Mammary epithelial cell (primary cell): ENCODE measurements at regions of chr11 and their contacts with region 1.

Region 1: GRCh38 chr11:128884703-128885338 is 6.3 kb upstream of the KCNJ5 start:
- DNase-seq: peak; percentile 60
- H3K4me3 ChIP-seq: no peak overlapping the region
- H3K27ac ChIP-seq: no peak overlapping the region
- H3K4me1 ChIP-seq: peaks cover 24% of the 10 kb centered on the region
- H3K27me3 ChIP-seq: no peaks in the 10 kb centered on the region
- CTCF ChIP-seq: peak; percentile 67 to 81

Region 2: DNA sequence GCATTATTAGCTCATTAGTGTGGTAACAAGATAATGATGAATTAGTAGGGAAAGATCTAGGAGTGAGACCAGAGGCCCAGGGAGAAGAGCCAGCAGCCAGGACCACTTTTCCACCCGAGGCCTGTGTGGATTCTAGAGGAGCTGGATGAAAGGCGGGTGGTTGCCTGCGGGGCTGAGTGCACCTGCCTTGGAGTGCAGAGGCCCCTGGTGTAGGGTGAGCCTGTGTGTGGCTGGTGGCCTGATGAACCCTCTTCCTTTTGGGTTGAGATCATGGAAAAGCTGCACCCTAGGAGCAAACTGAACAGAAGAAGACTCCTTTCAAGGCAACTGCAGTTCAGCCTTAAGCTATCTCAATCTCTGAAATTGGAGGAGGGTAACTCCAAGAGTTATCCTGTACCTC is 63.8 kb after region 1 on chr11:
- CTCF ChIA-PET with region 1: interaction called, 3 read pairs
- dilution Hi-C with region 1: loop called (anchors 5 kb)
- in situ Hi-C with region 1: loop called in 1 of 2 experiments (anchors 5 kb)
- intact Hi-C with region 1: no loop called
- DNase-seq: no peak
- H3K4me3 ChIP-seq: no peak overlapping the region
- H3K27ac ChIP-seq: no peak overlapping the region
- H3K4me1 ChIP-seq: no peaks in the 10 kb centered on the region
- H3K27me3 ChIP-seq: no peaks in the 10 kb centered on the region
- CTCF ChIP-seq: peak; percentile 2 to 40

Region 3: DNA sequence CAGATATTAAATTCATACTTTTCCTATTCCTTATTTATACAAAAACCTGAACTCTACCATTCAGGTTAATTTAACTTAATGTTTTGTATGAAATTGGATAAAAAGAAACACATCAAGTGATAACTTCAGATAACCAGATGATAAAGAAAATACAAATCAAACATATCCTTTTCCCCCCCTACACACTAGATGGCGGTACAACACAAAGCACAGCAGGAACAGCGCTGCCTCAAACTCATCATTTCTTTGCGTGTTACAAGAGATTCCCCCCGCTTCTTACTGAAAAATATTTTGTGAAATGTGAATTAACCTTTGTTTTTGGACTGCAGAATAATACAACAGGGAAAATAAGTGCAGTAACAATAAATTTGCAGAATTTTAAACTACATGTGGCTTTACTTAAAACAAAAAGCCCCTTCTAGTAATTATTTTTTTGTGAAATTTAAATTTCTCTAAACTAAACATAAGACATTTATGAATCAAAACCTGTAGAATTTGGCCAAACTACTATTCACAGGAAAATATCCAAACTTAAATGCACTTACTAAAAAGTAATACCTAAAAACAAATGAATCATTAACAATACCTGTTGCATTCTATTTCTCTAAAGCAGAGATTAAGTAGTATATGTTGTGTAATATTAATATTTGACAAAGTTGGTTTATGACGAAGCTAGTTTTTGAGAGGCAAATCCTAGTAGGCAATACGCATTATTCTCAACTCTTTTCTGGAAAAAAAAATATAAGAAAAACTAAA is 233.0 kb after region 1 on chr11:
- CTCF ChIA-PET with region 1: no interaction called
- dilution Hi-C with region 1: no loop called
- in situ Hi-C with region 1: loop called in 1 of 2 experiments (anchors 25 kb)
- intact Hi-C with region 1: loop called (anchors 1 kb)
- DNase-seq: peak; percentile 42
- H3K4me3 ChIP-seq: no peak overlapping the region
- H3K27ac ChIP-seq: no peak overlapping the region
- H3K4me1 ChIP-seq: peaks cover 10% of the 10 kb centered on the region
- H3K27me3 ChIP-seq: no peaks in the 10 kb centered on the region
- CTCF ChIP-seq: peak; percentile 93 to 94

Region 4: GRCh38 chr11:129143335-129143734 is 258.5 kb after region 1 on chr11:
- CTCF ChIA-PET with region 1: no interaction called
- dilution Hi-C with region 1: no loop called
- in situ Hi-C with region 1: no loop called
- intact Hi-C with region 1: no loop called
- DNase-seq: peak; percentile 100
- H3K4me3 ChIP-seq: peak overlapping the region in 2 of 3 experiments; percentile 20 to 50
- H3K27ac ChIP-seq: peak overlapping the region; percentile 98
- H3K4me1 ChIP-seq: peaks cover 38% of the 10 kb centered on the region
- H3K27me3 ChIP-seq: no peaks in the 10 kb centered on the region
- CTCF ChIP-seq: no peak

Region 5: GRCh38 chr11:129364143-129364654 is 479.4 kb after region 1 on chr11:
- CTCF ChIA-PET with region 1: no interaction called
- dilution Hi-C with region 1: no loop called
- in situ Hi-C with region 1: no loop called
- intact Hi-C with region 1: loop called (anchors 1 kb)
- DNase-seq: peak; percentile 82
- H3K4me3 ChIP-seq: no peak overlapping the region
- H3K27ac ChIP-seq: no peak overlapping the region
- H3K4me1 ChIP-seq: peaks cover 4% of the 10 kb centered on the region
- H3K27me3 ChIP-seq: peaks cover 21% of the 10 kb centered on the region
- CTCF ChIP-seq: peak; percentile 100

Region 6: GRCh38 chr11:129530154-129530895 is 645.5 kb after region 1 on chr11:
- CTCF ChIA-PET with region 1: no interaction called
- dilution Hi-C with region 1: no loop called
- in situ Hi-C with region 1: no loop called
- intact Hi-C with region 1: no loop called
- DNase-seq: no peak
- H3K4me3 ChIP-seq: no peak overlapping the region
- H3K27ac ChIP-seq: no peak overlapping the region
- H3K4me1 ChIP-seq: no peaks in the 10 kb centered on the region
- H3K27me3 ChIP-seq: no peaks in the 10 kb centered on the region
- CTCF ChIP-seq: no peak

Region 7: DNA sequence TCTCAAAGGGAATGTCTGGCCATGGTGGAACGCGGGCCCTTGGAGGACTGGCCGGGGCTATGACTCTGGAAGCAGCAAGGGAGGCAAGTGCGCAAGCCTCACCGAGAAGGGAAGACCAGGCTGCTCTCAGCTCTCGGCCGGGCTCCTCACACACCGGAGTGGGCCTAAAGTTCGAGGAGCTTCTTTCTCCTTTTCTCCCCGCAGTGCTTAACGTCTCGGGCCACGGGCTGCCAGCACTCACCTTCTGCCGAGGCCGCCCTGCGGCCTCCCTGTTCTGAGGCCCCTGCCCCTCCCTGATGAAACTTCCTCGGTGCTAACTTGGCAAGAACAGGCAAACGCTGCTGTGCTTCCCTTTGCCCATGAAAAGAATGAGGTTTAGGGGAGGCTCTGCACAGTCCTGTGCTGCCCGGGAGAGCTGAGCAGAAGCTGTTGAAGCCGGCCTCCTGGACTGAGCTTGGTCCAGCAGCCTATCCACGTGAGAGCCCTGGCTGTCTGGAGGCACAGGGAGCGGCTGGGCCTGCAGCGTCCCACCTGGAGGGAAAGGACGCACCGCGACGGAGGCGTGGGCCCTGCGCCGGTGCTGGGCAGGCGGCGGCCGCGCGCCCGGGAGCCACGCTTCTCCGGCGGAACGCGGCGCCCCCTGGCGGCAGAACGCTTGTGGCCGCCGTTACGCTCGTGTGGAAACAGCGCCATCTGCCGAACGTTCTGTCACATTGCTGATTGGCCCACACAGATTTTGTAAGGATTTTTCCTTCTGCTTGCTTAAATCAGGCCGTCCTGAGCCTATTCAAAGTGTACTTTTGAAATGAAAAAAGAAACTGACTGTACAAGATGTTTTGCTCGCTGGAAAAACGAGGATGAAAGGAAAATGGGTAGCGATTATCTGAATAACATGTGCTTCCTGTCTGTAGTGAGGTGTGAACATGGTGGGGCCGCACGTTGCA is 865.8 kb after region 1 on chr11:
- CTCF ChIA-PET with region 1: no interaction called
- dilution Hi-C with region 1: loop called (anchors 25 kb)
- in situ Hi-C with region 1: loop called in 1 of 2 experiments (anchors 25 kb)
- intact Hi-C with region 1: loop called (anchors 2 kb)
- DNase-seq: peak; percentile 55
- H3K4me3 ChIP-seq: peak overlapping the region in 1 of 3 experiments; percentile 34
- H3K27ac ChIP-seq: no peak overlapping the region
- H3K4me1 ChIP-seq: peaks cover 4% of the 10 kb centered on the region
- H3K27me3 ChIP-seq: peaks cover 18% of the 10 kb centered on the region
- CTCF ChIP-seq: peak; percentile 82 to 90